ENCODE measurements at regions of chr6 and their contacts with region 1.

Region 1: GRCh38 chr6:107459283-107460082 is at the start of gene PDSS2:
- DNase-seq: peak; percentile 97 to 98
- H3K4me3 ChIP-seq: peak within 1 kb of the TSS; percentile 85
- H3K4me3 Mint-ChIP-seq: peak within 1 kb of the TSS; percentile 88
- H3K27ac Mint-ChIP-seq: peak within 1 kb of the TSS; percentile 89
- H3K4me1 ChIP-seq: no peaks in the 10 kb centered on the region
- H3K4me1 Mint-ChIP-seq: peaks cover 6% of the 10 kb centered on the region
- H3K27me3 ChIP-seq: no peaks in the 10 kb centered on the region
- H3K27me3 Mint-ChIP-seq: no peaks in the 10 kb centered on the region
- CTCF ChIP-seq: peak; percentile 23 to 61
- total RNA-seq, gene PDSS2: 10.3 and 11.4 TPM in 2 replicates

Region 2: GRCh38 chr6:107154131-107154800 is 305.2 kb before region 1 on chr6:
- CTCF ChIA-PET with region 1: no interaction called
- POLR2A ChIA-PET with region 1: no interaction called
- intact Hi-C with region 1: loop called (anchors 5 kb)
- DNase-seq: peak in 1 of 2 experiments; percentile 37
- H3K4me3 ChIP-seq: no peak overlapping the region
- H3K4me3 Mint-ChIP-seq: no peak overlapping the region
- H3K27ac Mint-ChIP-seq: peak overlapping the region; percentile 40
- H3K4me1 ChIP-seq: peaks cover 33% of the 10 kb centered on the region
- H3K4me1 Mint-ChIP-seq: peaks cover 38% of the 10 kb centered on the region
- H3K27me3 ChIP-seq: no peaks in the 10 kb centered on the region
- H3K27me3 Mint-ChIP-seq: no peaks in the 10 kb centered on the region
- CTCF ChIP-seq: no peak

Region 3: DNA sequence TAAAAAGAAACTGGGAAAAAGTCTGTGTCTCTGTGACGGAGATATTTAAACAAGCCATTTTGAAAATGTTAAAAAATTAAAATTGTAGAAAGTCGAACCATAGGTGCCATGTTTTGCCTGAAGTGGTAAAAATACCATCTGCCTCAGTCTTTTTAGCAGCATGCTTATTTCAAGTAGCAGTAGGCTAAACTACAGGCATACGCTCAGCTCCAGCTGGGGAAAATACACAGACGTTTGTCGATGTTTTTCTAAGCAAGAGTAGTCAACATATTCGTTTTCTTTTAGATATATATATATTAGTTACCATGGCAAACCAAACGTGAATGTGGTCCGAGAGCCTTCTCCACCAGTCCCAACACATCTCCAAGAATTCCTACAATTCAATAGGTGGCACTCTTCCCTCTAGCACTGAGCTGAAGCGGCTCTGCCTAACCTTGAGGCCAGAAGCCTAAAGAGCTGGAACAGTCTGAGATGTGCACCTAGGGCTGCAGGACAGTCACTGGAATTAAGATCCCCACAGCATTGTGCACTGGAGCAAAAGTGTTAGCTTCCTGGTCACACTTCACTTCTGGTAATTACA is 274.0 kb before region 1 on chr6:
- CTCF ChIA-PET with region 1: interaction called, 3 read pairs
- POLR2A ChIA-PET with region 1: no interaction called
- intact Hi-C with region 1: loop called (anchors 5 kb)
- DNase-seq: peak; percentile 44
- H3K4me3 ChIP-seq: no peak overlapping the region
- H3K4me3 Mint-ChIP-seq: no peak overlapping the region
- H3K27ac Mint-ChIP-seq: no peak overlapping the region
- H3K4me1 ChIP-seq: no peaks in the 10 kb centered on the region
- H3K4me1 Mint-ChIP-seq: no peaks in the 10 kb centered on the region
- H3K27me3 ChIP-seq: no peaks in the 10 kb centered on the region
- H3K27me3 Mint-ChIP-seq: no peaks in the 10 kb centered on the region
- CTCF ChIP-seq: peak; percentile 18 to 59

Region 4: GRCh38 chr6:107267634-107268033 is 191.8 kb before region 1 on chr6:
- CTCF ChIA-PET with region 1: no interaction called
- POLR2A ChIA-PET with region 1: interaction called, 13 read pairs
- intact Hi-C with region 1: no loop called
- DNase-seq: no peak
- H3K4me3 ChIP-seq: no peak overlapping the region
- H3K4me3 Mint-ChIP-seq: no peak overlapping the region
- H3K27ac Mint-ChIP-seq: no peak overlapping the region
- H3K4me1 ChIP-seq: peaks cover 7% of the 10 kb centered on the region; the same call in 1 of the 2 replicates
- H3K4me1 Mint-ChIP-seq: peaks cover 16% of the 10 kb centered on the region
- H3K27me3 ChIP-seq: no peaks in the 10 kb centered on the region
- H3K27me3 Mint-ChIP-seq: no peaks in the 10 kb centered on the region
- CTCF ChIP-seq: no peak

Region 5: GRCh38 chr6:107361753-107362604 is 97.5 kb before region 1 on chr6:
- CTCF ChIA-PET with region 1: no interaction called
- POLR2A ChIA-PET with region 1: interaction called, 3 read pairs
- intact Hi-C with region 1: loop called (anchors 5 kb)
- DNase-seq: peak; percentile 29 to 40
- H3K4me3 ChIP-seq: no peak overlapping the region
- H3K4me3 Mint-ChIP-seq: no peak overlapping the region
- H3K27ac Mint-ChIP-seq: no peak overlapping the region
- H3K4me1 ChIP-seq: no peaks in the 10 kb centered on the region
- H3K4me1 Mint-ChIP-seq: peaks cover 12% of the 10 kb centered on the region
- H3K27me3 ChIP-seq: no peaks in the 10 kb centered on the region
- H3K27me3 Mint-ChIP-seq: no peaks in the 10 kb centered on the region
- CTCF ChIP-seq: no peak

Region 6: DNA sequence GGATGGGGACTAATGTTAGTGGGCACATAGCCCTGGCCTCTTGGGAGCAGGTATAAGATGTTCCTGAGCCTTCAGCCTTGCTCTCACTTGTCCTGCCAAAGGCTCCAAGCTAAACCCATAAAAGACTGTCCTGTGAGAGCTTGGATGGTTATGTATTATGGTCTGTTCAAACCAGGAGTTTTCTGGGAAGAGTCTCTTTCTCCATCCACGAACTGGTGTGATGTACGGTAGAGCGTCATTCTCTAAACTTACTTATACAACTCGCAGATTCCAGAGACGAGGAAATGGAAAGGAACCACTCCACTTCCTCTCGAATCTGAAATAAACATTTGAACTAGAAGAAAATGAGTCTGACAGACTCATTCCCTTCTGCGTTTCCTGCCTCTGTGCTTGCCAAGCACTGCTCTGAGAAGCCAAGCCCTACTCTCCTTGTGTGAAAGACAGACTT is 35.7 kb after region 1 on chr6:
- CTCF ChIA-PET with region 1: no interaction called
- POLR2A ChIA-PET with region 1: no interaction called
- intact Hi-C with region 1: no loop called
- DNase-seq: no peak
- H3K4me3 ChIP-seq: no peak overlapping the region
- H3K4me3 Mint-ChIP-seq: no peak overlapping the region
- H3K27ac Mint-ChIP-seq: no peak overlapping the region
- H3K4me1 ChIP-seq: no peaks in the 10 kb centered on the region
- H3K4me1 Mint-ChIP-seq: no peaks in the 10 kb centered on the region
- H3K27me3 ChIP-seq: peaks cover 3% of the 10 kb centered on the region
- H3K27me3 Mint-ChIP-seq: peaks cover 13% of the 10 kb centered on the region
- CTCF ChIP-seq: no peak